Right ventricle myocardium inferior (tissue), 1 donor: ENCODE measurements at regions of chr10 and their contacts with region 1.

Region 1: DNA sequence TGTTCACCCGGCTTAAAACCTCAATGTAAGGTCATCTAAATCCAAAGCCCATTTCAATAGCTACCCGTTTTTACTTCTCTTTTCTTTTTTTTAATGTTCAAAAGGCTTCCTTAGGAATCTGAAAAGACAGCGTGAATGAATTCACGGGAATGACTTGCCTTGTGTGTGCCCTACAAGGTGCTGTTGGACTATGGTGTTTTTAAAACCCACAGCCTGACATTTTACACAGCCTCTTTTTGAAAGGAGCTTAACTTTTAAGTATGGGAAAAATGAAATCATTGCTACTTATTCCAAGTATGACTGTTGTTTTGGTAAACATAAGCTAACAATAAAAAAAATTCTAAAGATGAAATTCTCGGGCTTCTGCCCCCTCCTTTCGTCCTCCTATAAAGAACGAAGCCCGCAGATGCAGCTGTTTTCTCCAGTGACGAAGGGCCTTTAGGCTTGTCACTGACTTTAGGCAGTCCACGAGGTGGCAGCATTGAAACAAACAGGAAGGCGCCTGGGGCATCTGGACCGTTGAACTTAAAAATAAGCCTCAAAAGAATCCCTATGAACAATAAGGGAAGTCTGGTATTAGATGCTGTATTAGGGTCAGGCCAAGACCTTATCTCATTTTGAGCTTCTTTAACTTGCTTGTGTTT is 141.3 kb downstream of the NRP1 start:
- DNase-seq: peak; percentile 79
- ATAC-seq: peak; percentile 92

Region 2: GRCh38 chr10:33234831-33235237 is 41.7 kb after region 1 on chr10:
- intact Hi-C with region 1: loop called (anchors 5 kb)
- DNase-seq: peak; percentile 68
- ATAC-seq: peak; percentile 62

Region 3: GRCh38 chr10:33335801-33336581 is 142.8 kb after region 1 on chr10:
- intact Hi-C with region 1: loop called (anchors 2 kb)
- DNase-seq: peak; percentile 85
- ATAC-seq: peak; percentile 66

Region 4: DNA sequence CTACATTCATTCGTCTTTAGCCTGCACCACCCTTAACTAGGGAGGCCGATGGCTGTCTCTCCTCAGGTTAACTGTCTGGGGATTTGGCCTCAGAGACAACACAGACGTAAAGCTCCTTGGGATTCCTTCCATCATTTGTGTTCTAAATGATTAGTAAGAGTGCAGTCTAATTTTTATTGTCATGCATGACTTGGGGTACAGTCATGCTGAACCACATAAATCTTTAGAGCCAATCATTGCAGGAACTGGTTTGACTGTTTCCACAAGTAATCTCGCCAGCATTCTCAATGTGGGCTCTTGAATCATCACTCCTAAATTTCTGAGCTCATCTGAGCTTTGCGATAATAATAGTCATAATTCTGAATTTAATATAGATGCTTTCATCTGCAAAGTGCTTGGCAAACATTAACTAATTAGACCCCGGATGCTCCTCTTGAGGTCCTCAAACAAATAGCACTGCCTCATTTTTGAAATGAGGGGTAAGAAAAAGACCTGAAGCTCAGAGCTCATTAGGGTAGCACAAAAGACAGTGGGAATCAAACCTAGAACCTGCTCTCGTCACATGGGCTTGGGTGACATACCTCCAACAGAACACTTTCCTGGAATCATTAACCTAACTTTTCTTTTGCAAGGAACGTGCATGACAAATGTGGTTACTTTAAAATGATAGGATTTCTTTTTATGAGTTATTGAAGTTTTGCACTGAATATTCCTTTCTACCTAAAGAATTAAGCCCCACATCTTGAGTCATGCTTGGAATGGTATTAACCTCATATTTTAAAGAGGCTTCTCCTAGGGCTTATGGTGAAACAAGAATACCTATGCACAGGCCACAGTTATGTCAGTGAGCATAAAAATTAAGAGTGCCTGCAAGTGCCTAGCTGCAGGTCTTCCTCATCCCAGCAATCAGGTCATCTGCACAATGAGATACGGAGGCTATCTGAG is 260.2 kb after region 1 on chr10:
- intact Hi-C with region 1: no loop called
- DNase-seq: no peak
- ATAC-seq: no peak